ENCODE measurements at regions of chr9 and their contacts with region 1.

Region 1: DNA sequence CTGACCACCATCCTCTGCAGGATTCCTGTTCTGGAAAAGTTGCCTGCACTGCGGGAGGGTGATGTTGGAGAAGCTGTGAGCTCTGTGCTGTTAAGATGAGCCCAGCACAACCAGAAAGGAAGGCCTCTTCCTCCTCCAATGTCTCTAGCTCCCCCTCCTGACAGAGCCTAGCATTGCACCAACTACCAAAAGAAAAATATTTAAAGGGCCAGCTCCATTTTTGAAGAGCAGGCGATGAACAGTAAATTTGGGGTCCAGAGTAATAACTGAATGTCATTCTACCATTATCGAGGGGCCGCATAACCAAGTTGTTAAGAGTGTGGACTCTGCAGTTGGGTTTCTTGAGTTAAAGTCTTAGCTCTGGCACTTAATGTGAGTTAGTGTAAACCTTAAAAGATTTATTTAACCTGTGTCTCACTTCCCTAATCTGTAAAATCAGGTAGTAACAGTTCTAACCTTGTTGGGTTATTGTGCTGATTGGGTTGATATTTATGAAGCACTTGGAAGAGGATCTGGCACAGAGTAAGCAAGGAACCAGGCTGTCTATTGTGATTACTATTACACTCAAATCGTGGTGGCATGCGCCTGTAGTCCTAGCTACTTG is 3.9 kb downstream of the TEX53 start:
- DNase-seq: peak; percentile 56 to 93
- H3K4me3 ChIP-seq: no peak overlapping the region
- H3K27ac ChIP-seq: no peak overlapping the region
- H3K4me1 ChIP-seq: peaks cover 0 to 3% (median 2%) of the 10 kb centered on the region in 4 experiments; a peak in 2 of 7 replicates
- H3K27me3 ChIP-seq: no peaks in the 10 kb centered on the region; a peak in 1 of 7 replicates
- CTCF ChIP-seq: peak; percentile 41 to 93 (median 89)
- EP300 ChIP-seq: no peak
- POLR2A ChIP-seq: no peak
- RAD21 ChIP-seq: peak; percentile 95 to 97

Region 2: DNA sequence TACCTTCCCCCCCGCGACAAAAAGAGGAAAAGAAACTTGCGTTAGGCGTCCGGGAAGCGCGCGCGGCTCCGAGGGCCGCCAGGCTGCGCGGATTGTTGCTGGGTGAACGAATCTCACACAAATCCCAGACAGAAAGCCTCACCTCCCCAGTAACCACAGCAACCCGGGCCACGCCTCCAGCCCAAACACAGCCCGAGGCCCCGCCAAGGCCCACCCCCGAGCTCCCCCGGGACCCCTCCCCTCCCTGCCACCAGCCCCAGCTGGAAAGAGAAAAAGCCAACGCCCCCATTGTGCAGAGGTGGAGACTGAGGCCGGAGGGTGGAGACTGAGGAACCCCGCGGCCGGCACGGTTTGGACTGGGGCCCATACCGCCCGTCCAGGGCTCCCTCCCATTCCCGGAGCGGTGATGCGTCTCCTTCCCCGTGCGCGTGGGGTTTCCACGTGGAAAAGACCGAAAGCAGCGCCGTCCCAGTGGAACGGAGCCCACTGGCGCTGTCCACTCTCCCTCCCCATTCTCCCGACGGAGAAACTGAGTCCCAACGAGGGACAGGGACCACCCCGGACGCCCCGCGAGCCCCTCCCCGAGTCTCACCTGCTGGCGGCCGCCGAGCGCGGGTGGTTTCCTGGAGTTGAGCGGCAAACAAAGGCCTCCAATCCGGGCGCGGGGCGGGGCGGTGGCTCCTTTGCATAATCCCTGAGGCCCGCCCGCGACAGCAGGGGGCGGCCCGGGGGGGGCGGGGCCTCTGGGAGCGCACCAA is 255.6 kb before region 1 on chr9:
- CTCF ChIA-PET with region 1: interaction called, 21 read pairs
- POLR2A ChIA-PET with region 1: interaction called, 3 read pairs
- DNase-seq: peak; percentile 77 to 98
- H3K4me3 ChIP-seq: peak overlapping the region; percentile 55 to 82 (median 70)
- H3K27ac ChIP-seq: peak overlapping the region; percentile 49; the same call in 1 of the 2 replicates
- H3K4me1 ChIP-seq: peaks cover 6 to 17% (median 11%) of the 10 kb centered on the region in 4 experiments; a peak in 6 of 7 replicates
- H3K27me3 ChIP-seq: no peaks in the 10 kb centered on the region
- CTCF ChIP-seq: no peak
- EP300 ChIP-seq: no peak
- POLR2A ChIP-seq: no peak
- RAD21 ChIP-seq: no peak

Region 3: GRCh38 chr9:114434878-114435311 is 218.8 kb before region 1 on chr9:
- CTCF ChIA-PET with region 1: interaction called, 165 read pairs
- POLR2A ChIA-PET with region 1: interaction called, 3 read pairs
- DNase-seq: peak in 1 of 2 experiments; percentile 31
- H3K4me3 ChIP-seq: no peak overlapping the region
- H3K27ac ChIP-seq: no peak overlapping the region
- H3K4me1 ChIP-seq: peaks cover 0 to 6% (median 0%) of the 10 kb centered on the region in 4 experiments; a peak in 3 of 7 replicates
- H3K27me3 ChIP-seq: no peaks in the 10 kb centered on the region
- CTCF ChIP-seq: peak; percentile 51 to 91 (median 84)
- EP300 ChIP-seq: no peak
- POLR2A ChIP-seq: no peak
- RAD21 ChIP-seq: peak; percentile 96

Region 4: DNA sequence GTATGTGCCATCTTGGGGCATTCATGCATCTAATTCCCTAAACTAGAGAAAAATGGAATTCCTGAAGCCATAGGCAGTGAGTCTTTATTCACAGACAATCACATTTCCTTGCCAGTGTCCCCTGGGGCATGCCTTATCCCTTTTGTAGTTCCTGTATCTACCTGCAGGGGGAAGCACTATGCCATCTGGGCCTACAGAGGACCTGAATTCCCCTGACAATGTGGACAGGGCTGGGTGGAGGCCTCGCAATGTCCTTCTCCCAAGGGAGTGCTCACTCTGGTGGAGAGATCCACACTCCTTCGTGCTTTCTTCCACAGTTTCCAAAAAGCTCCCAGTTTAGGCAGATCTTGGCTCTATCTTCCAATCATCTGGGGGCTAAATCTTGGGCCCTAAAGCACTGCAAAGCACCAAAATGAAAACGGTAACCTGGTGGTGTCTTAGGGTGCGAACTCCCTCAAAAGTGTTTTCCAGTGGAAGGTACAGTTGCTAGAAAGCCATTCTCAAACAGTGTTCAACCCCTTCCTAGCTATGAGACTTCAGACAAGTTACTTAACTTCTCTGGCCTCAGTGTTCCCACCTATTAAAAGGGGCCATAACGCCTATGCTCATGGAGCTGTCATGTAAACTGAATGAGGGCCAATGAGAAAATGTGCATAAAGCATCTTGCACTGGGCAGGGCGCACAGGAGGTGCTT is 165.9 kb before region 1 on chr9:
- CTCF ChIA-PET with region 1: interaction called, 89 read pairs
- POLR2A ChIA-PET with region 1: no interaction called
- DNase-seq: peak in 1 of 2 experiments; percentile 78
- H3K4me3 ChIP-seq: no peak overlapping the region
- H3K27ac ChIP-seq: no peak overlapping the region
- H3K4me1 ChIP-seq: peaks cover 0 to 3% (median 0%) of the 10 kb centered on the region in 4 experiments; a peak in 3 of 7 replicates
- H3K27me3 ChIP-seq: no peaks in the 10 kb centered on the region
- CTCF ChIP-seq: peak; percentile 70 to 86 (median 81)
- EP300 ChIP-seq: no peak
- POLR2A ChIP-seq: no peak
- RAD21 ChIP-seq: peak; percentile 83 to 86

Region 5: DNA sequence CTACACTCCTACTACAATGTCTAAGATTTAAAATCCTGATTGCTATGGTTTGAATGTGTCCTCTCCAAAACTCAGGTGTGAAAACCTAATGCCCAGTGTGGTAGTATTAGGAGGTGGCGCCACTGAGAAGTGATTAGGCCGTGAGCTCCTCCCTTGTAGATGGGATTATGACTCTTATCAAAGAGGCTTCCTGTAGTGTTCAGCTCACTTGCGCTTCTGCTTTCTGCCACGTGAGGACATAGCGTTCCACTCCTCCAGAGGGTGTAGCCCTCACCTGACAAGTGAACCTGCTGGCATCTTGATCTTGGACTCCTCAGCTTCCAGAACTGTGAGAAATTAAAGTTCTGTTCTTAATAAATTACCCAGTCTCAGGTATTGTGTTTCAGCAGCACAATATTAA is 115.4 kb before region 1 on chr9:
- CTCF ChIA-PET with region 1: interaction called, 30 read pairs
- POLR2A ChIA-PET with region 1: no interaction called
- DNase-seq: peak in 1 of 2 experiments; percentile 23
- H3K4me3 ChIP-seq: no peak overlapping the region
- H3K27ac ChIP-seq: no peak overlapping the region
- H3K4me1 ChIP-seq: no peaks in the 10 kb centered on the region
- H3K27me3 ChIP-seq: no peaks in the 10 kb centered on the region
- CTCF ChIP-seq: peak; percentile 47 to 66 (median 51)
- EP300 ChIP-seq: no peak
- POLR2A ChIP-seq: no peak
- RAD21 ChIP-seq: peak; percentile 64 to 68

Region 6: GRCh38 chr9:114587385-114588202 is 66.1 kb before region 1 on chr9 and contains the start of gene ATP6V1G1:
- CTCF ChIA-PET with region 1: interaction called, 33 read pairs
- POLR2A ChIA-PET with region 1: interaction called, 6 read pairs
- DNase-seq: peak; percentile 96 to 97
- H3K4me3 ChIP-seq: peak within 1 kb of the TSS; percentile 75 to 97 (median 89)
- H3K27ac ChIP-seq: peak within 1 kb of the TSS; percentile 82
- H3K4me1 ChIP-seq: peaks cover 6 to 16% (median 7%) of the 10 kb centered on the region in 4 experiments
- H3K27me3 ChIP-seq: no peaks in the 10 kb centered on the region
- CTCF ChIP-seq: no peak
- EP300 ChIP-seq: peak; percentile 5 to 46; a peak in 2 of 3 replicates
- POLR2A ChIP-seq: peak; percentile 84 to 90
- RAD21 ChIP-seq: peak in 1 of 2 experiments; percentile 10; a peak in 1 of 4 replicates
- total RNA-seq, gene ATP6V1G1: 112 and 114 TPM in 2 replicates

Region 7: DNA sequence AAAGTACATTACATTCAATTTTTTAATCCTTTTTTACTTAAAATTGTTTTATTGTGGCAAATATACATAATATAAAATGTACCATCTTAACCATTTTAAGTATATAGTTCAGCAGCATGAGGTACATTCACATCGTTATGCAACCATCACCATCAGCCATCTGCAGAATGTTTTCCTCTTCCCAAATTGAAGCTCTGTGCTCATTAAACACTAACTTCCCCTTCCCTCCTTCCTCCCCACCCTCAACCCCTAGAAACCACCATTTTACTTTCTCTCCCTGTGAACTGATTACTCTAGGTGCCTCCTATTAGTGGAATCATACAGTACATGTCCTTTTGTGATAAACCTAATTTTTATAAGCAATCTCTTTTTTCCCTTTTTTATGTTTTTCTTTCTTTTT is 11.7 kb before region 1 on chr9:
- CTCF ChIA-PET with region 1: interaction called, 35 read pairs
- POLR2A ChIA-PET with region 1: interaction called, 4 read pairs
- DNase-seq: no peak
- H3K4me3 ChIP-seq: no peak overlapping the region
- H3K27ac ChIP-seq: no peak overlapping the region
- H3K4me1 ChIP-seq: no peaks in the 10 kb centered on the region
- H3K27me3 ChIP-seq: no peaks in the 10 kb centered on the region
- CTCF ChIP-seq: no peak
- EP300 ChIP-seq: no peak
- POLR2A ChIP-seq: no peak
- RAD21 ChIP-seq: no peak

Measured in H1 (cell line).